ENCODE measurements at regions of chr17 and their contacts with region 1.

Region 1: GRCh38 chr17:10745231-10745630 is 15.4 kb upstream of the TMEM220 start:
- DNase-seq: no peak
- ATAC-seq: no peak
- H3K4me3 ChIP-seq: no peak overlapping the region
- H3K27ac ChIP-seq: no peak overlapping the region
- H3K4me1 ChIP-seq: peaks cover 3% of the 10 kb centered on the region; the same call in 1 of the 3 replicates
- CTCF ChIP-seq: no peak
- EP300 ChIP-seq: no peak
- POLR2A ChIP-seq: no peak
- RAD21 ChIP-seq: no peak

Region 2: DNA sequence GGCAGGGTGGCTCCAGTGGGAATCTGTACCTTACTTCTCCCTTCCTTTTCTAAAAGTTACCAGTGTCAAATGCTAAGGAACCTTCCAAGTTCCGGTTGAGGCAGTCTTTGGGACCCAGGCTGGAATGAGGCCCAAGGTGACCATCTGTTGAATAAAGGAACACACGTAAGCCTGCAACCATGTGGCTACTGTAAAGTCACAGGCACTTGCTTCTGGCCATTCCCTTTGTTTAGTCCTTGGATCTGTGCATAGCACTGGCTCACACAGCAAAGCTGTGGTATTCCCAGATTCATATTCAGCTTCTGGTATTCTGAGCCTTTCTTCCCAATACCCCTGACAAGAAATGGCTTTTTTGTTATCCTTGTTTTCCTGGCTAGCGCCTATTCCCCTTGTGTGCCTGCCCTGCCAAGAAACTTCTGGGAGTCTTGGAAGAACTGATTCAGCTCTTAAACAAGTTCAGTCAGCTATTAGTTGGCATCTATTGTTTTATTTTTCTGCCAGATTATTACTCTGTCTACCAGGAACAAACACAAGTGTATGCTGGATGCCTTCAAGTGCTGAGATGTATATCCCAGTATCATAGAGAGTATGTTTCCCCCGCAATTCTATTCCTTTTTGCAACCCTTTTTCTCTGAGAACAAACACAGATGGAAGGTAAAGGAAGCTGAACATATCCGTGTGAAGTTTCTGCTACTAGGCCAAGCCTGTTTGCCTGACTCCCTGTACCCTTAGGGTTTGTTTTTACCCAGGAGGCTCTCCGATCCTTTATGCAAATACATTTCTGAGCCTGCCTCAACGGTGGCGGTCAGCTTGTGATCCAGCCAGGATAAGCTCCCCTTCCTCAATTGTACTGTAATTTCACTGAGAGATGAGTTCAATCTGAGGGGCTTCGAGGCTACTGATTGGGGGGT is 45.5 kb after region 1 on chr17:
- CTCF ChIA-PET with region 1: no interaction called
- POLR2A ChIA-PET with region 1: no interaction called
- DNase-seq: no peak
- ATAC-seq: no peak
- H3K4me3 ChIP-seq: no peak overlapping the region
- H3K27ac ChIP-seq: no peak overlapping the region
- H3K4me1 ChIP-seq: no peaks in the 10 kb centered on the region
- CTCF ChIP-seq: no peak
- EP300 ChIP-seq: no peak
- POLR2A ChIP-seq: no peak
- RAD21 ChIP-seq: no peak

Region 3: GRCh38 chr17:10844621-10845387 is 99.6 kb after region 1 on chr17:
- CTCF ChIA-PET with region 1: interaction called, 16 read pairs
- POLR2A ChIA-PET with region 1: no interaction called
- DNase-seq: peak; percentile 82 to 86
- ATAC-seq: peak; percentile 91 to 98
- H3K4me3 ChIP-seq: peak overlapping the region; percentile 38
- H3K27ac ChIP-seq: peak overlapping the region; percentile 34 to 77
- H3K4me1 ChIP-seq: no peaks in the 10 kb centered on the region
- CTCF ChIP-seq: peak; percentile 97
- EP300 ChIP-seq: no peak
- POLR2A ChIP-seq: no peak
- RAD21 ChIP-seq: peak; percentile 90 to 93

Measured in A549 (cell line).